ENCODE measurements at regions of chr12 and their contacts with region 1.

Region 1: GRCh38 chr12:94875525-94875924 is 128.0 kb downstream of the NDUFA12 start:
- DNase-seq: peak; percentile 21
- ATAC-seq: peak; percentile 75
- H3K4me3 ChIP-seq: no peak overlapping the region
- H3K27ac ChIP-seq: no peak overlapping the region
- H3K4me1 ChIP-seq: no peaks in the 10 kb centered on the region
- H3K27me3 ChIP-seq: peaks cover 3 to 43% of the 10 kb centered on the region in 2 experiments
- CTCF ChIP-seq: peak; percentile 58
- EP300 ChIP-seq: no peak
- POLR2A ChIP-seq: no peak
- RAD21 ChIP-seq: no peak

Region 2: GRCh38 chr12:94832780-94833681 is 42.5 kb before region 1 on chr12:
- CTCF ChIA-PET with region 1: no interaction called
- POLR2A ChIA-PET with region 1: no interaction called
- in situ Hi-C with region 1: no loop called
- intact Hi-C with region 1: no loop called
- DNase-seq: no peak
- ATAC-seq: no peak
- H3K4me3 ChIP-seq: no peak overlapping the region
- H3K27ac ChIP-seq: no peak overlapping the region
- H3K4me1 ChIP-seq: peaks cover 10% of the 10 kb centered on the region
- H3K27me3 ChIP-seq: no peaks in the 10 kb centered on the region; a peak in 1 of 5 replicates
- CTCF ChIP-seq: no peak
- EP300 ChIP-seq: no peak
- POLR2A ChIP-seq: no peak
- RAD21 ChIP-seq: no peak

Region 3: GRCh38 chr12:94922561-94922960 is 47.0 kb after region 1 on chr12:
- CTCF ChIA-PET with region 1: no interaction called
- POLR2A ChIA-PET with region 1: no interaction called
- in situ Hi-C with region 1: no loop called
- intact Hi-C with region 1: no loop called
- DNase-seq: no peak
- ATAC-seq: no peak
- H3K4me3 ChIP-seq: no peak overlapping the region
- H3K27ac ChIP-seq: no peak overlapping the region
- H3K4me1 ChIP-seq: 0 out of 2 replicates have a peak, but pooled peaks cover 6% of the 10 kb centered on the region
- H3K27me3 ChIP-seq: no peaks in the 10 kb centered on the region
- CTCF ChIP-seq: no peak
- EP300 ChIP-seq: no peak
- POLR2A ChIP-seq: no peak
- RAD21 ChIP-seq: no peak

Region 4: DNA sequence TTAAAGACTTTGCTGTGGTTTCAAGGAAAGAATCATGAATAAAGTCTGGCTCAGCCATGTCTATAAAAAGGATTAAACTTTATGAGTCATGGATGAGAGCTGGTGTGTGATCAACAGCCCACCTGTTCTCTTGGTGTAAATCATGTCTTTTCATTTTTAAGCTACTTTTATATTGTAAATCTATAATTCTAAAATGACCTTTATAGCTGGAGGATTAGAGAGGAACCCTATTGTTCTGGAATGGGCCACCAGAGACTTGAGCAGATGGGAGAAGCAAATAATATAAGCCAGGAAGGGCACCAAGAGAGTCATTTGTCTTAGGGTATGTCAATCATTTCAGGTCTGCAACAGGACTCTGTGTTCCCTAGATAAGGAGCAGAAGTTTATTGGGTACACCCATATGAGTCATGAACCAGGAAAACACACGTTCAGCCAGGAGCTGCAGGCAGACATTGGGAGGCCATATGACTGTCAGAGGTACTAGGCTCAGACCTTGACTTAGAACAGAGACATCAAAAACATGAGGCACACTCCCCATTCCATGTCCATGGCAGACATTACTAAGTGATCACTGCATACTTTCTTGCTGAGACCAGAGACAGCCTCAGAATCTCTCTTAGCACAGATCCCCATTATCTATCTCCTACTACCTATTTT is 78.6 kb after region 1 on chr12:
- CTCF ChIA-PET with region 1: no interaction called
- POLR2A ChIA-PET with region 1: no interaction called
- in situ Hi-C with region 1: no loop called
- intact Hi-C with region 1: no loop called
- DNase-seq: no peak
- ATAC-seq: no peak
- H3K4me3 ChIP-seq: no peak overlapping the region
- H3K27ac ChIP-seq: no peak overlapping the region
- H3K4me1 ChIP-seq: no peaks in the 10 kb centered on the region; the same call in 1 of the 2 replicates
- H3K27me3 ChIP-seq: no peaks in the 10 kb centered on the region
- CTCF ChIP-seq: no peak
- EP300 ChIP-seq: no peak
- POLR2A ChIP-seq: no peak
- RAD21 ChIP-seq: no peak

Region 5: GRCh38 chr12:94980577-94980976 is 105.1 kb after region 1 on chr12:
- CTCF ChIA-PET with region 1: no interaction called
- POLR2A ChIA-PET with region 1: no interaction called
- in situ Hi-C with region 1: no loop called
- intact Hi-C with region 1: loop called (anchors 5 kb)
- DNase-seq: no peak
- ATAC-seq: no peak
- H3K4me3 ChIP-seq: no peak overlapping the region
- H3K27ac ChIP-seq: no peak overlapping the region
- H3K4me1 ChIP-seq: no peaks in the 10 kb centered on the region
- H3K27me3 ChIP-seq: no peaks in the 10 kb centered on the region; a peak in 1 of 5 replicates
- CTCF ChIP-seq: peak; percentile 53
- EP300 ChIP-seq: no peak
- POLR2A ChIP-seq: no peak
- RAD21 ChIP-seq: no peak

Region 6: GRCh38 chr12:96489103-96490056 is 1613.9 kb after region 1 on chr12 and contains the start of gene CFAP54:
- CTCF ChIA-PET with region 1: no interaction called
- POLR2A ChIA-PET with region 1: no interaction called
- in situ Hi-C with region 1: no loop called
- intact Hi-C with region 1: loop called (anchors 5 kb)
- DNase-seq: peak; percentile 83
- ATAC-seq: peak; percentile 99
- H3K4me3 ChIP-seq: peak within 1 kb of the TSS; percentile 64 to 76 (median 69)
- H3K27ac ChIP-seq: no peak within 1 kb of the TSS
- H3K4me1 ChIP-seq: peaks cover 11% of the 10 kb centered on the region; the same call in 1 of the 2 replicates
- H3K27me3 ChIP-seq: no peaks in the 10 kb centered on the region
- CTCF ChIP-seq: peak; percentile 96
- EP300 ChIP-seq: 0 out of 4 replicates have a peak, but pooled peaks of 1 of the 2 experiments have one; percentile 30
- POLR2A ChIP-seq: no peak
- RAD21 ChIP-seq: peak; percentile 81
- total RNA-seq, gene CFAP54: not detected in 2 replicates

Measured in HepG2 (cell line).